Natural killer cell (primary cell): ENCODE measurements at regions of chr4 and their contacts with region 1.

Region 1: GRCh38 chr4:41990365-41991111 is at the start of gene SLC30A9:
- DNase-seq: peak; percentile 87 to 99
- ATAC-seq: peak; percentile 94 to 98 (median 96)
- H3K4me3 ChIP-seq: peak within 1 kb of the TSS; percentile 88
- H3K4me3 Mint-ChIP-seq: peak within 1 kb of the TSS; percentile 98
- H3K27ac ChIP-seq: peak within 1 kb of the TSS; percentile 86
- H3K27ac Mint-ChIP-seq: peak within 1 kb of the TSS; percentile 97 to 98
- H3K4me1 ChIP-seq: peaks cover 16% of the 10 kb centered on the region
- H3K4me1 Mint-ChIP-seq: peaks cover 23 to 24% of the 10 kb centered on the region in 2 donors
- H3K27me3 ChIP-seq: no peaks in the 10 kb centered on the region
- H3K27me3 Mint-ChIP-seq: peaks cover 0 to 3% of the 10 kb centered on the region in 2 donors
- CTCF ChIP-seq: peak; percentile 33
- total RNA-seq, gene SLC30A9: 22.2 to 23.1 (median 22.8) TPM

Region 2: DNA sequence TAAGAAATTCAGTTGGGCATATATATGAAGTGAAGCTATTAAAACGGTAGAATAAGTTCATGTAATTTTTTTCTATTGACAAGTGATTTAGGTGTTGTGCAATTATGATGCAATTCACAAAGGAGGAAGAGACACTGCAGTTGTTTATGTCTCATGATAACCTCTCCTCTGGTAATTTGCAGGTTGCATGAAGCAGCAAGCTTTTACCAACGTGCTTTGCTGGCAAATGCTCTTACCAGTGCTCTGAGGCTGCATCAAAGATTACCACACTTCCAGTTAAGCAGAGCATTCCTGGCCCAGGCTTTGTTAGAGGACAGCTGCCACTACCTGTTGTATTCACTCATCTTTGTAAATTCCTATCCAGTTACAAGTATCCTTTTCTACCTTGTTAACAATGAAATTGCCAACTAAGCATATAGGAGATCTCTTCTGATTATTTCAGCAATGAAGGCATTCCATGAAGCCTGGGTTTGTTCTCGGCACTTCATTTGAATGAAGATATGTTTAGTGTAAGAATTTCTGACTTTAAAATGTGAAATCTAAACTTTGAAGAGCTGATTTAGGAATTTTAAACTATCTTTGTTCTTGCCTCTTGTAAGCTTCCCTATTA is 51.4 kb before region 1 on chr4:
- intact Hi-C with region 1: loop called (anchors 2 kb)
- DNase-seq: no peak
- ATAC-seq: no peak
- H3K4me3 ChIP-seq: no peak overlapping the region
- H3K4me3 Mint-ChIP-seq: no peak overlapping the region
- H3K27ac ChIP-seq: no peak overlapping the region
- H3K27ac Mint-ChIP-seq: no peak overlapping the region
- H3K4me1 ChIP-seq: peaks cover 17% of the 10 kb centered on the region
- H3K4me1 Mint-ChIP-seq: peaks cover 41 to 52% of the 10 kb centered on the region in 2 donors
- H3K27me3 ChIP-seq: no peaks in the 10 kb centered on the region
- H3K27me3 Mint-ChIP-seq: no peaks in the 10 kb centered on the region
- CTCF ChIP-seq: no peak